CD4-positive, alpha-beta T cell (primary cell): ENCODE measurements at regions of chr9 and their contacts with region 1.

Region 1: DNA sequence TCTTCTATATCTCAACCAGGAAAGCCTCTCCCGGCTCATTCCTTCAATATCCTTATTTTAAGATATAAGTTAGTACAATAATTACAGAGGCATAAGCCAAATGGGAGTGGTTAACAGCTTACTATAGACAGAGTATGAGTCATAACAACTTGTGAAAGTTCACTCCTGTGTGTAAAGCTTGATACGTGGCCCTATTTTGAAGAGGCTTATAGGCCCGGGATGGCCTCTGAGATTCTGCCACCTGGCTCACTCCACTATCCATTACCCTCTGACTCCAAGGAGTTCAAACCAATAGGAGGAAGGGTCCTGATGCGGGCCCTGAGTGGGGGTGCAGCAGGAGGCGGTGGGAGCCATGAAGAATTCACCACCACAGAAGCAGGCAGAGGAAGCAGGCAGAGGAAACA is 36.6 kb downstream of the B4GALT1 start:
- DNase-seq: peak in 2 of 14 experiments; percentile 31 to 47
- ATAC-seq: peak; percentile 46
- H3K4me3 ChIP-seq: no peak overlapping the region
- H3K4me3 Mint-ChIP-seq: no peak overlapping the region
- H3K27ac ChIP-seq: no peak overlapping the region
- H3K27ac Mint-ChIP-seq: peak overlapping the region; percentile 42
- H3K4me1 ChIP-seq: peaks cover 27% of the 10 kb centered on the region
- H3K4me1 Mint-ChIP-seq: peaks cover 32% of the 10 kb centered on the region
- H3K27me3 ChIP-seq: no peaks in the 10 kb centered on the region
- H3K27me3 Mint-ChIP-seq: no peaks in the 10 kb centered on the region
- CTCF ChIP-seq: no peak

Region 2: GRCh38 chr9:33099725-33100350 is 30.7 kb before region 1 on chr9:
- CTCF ChIA-PET with region 1: no interaction called
- POLR2A ChIA-PET with region 1: no interaction called
- intact Hi-C with region 1: loop called in 1 of 2 experiments (anchors 5 kb)
- DNase-seq: no peak
- ATAC-seq: no peak
- H3K4me3 ChIP-seq: no peak overlapping the region
- H3K4me3 Mint-ChIP-seq: no peak overlapping the region
- H3K27ac ChIP-seq: no peak overlapping the region
- H3K27ac Mint-ChIP-seq: no peak overlapping the region
- H3K4me1 ChIP-seq: no peaks in the 10 kb centered on the region
- H3K4me1 Mint-ChIP-seq: no peaks in the 10 kb centered on the region
- H3K27me3 ChIP-seq: no peaks in the 10 kb centered on the region
- H3K27me3 Mint-ChIP-seq: no peaks in the 10 kb centered on the region
- CTCF ChIP-seq: no peak